ENCODE measurements at regions of chr1 and their contacts with region 1.

Region 1: DNA sequence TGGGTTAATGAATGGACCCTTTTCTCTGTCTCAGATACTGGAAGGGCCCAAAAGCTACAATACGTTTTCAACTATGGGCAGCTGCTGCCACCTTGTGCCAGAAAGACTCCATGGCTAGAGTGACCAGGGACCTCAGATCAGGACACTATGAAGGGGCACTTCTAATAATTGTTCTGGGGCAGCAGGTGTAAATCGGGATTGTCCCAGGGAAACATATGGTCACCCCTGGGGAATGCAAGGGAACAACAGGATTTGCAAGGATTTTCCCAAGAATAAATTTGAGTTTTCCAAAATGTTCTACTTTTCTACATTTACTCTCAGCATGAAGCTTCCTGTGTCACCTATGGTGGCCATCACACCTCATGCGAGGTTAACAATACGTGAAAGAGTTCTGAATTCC is 12.0 kb upstream of the FCAMR start:
- DNase-seq: peak; percentile 81
- H3K4me3 Mint-ChIP-seq: no peak overlapping the region
- H3K27ac Mint-ChIP-seq: no peak overlapping the region
- H3K4me1 Mint-ChIP-seq: no peaks in the 10 kb centered on the region
- H3K27me3 Mint-ChIP-seq: no peaks in the 10 kb centered on the region
- CTCF ChIP-seq: peak; percentile 99

Region 2: GRCh38 chr1:206002871-206003801 is 979.1 kb before region 1 on chr1 and contains the start of gene RAB7B:
- CTCF ChIA-PET with region 1: no interaction called
- POLR2A ChIA-PET with region 1: no interaction called
- intact Hi-C with region 1: no loop called
- DNase-seq: peak; percentile 91
- H3K4me3 Mint-ChIP-seq: peak within 1 kb of the TSS; percentile 69
- H3K27ac Mint-ChIP-seq: peak within 1 kb of the TSS; percentile 75
- H3K4me1 Mint-ChIP-seq: peaks cover 37% of the 10 kb centered on the region
- H3K27me3 Mint-ChIP-seq: no peaks in the 10 kb centered on the region
- CTCF ChIP-seq: no peak
- total RNA-seq, gene RAB7B: 1.6 and 3.6 TPM in 2 replicates

Region 3: DNA sequence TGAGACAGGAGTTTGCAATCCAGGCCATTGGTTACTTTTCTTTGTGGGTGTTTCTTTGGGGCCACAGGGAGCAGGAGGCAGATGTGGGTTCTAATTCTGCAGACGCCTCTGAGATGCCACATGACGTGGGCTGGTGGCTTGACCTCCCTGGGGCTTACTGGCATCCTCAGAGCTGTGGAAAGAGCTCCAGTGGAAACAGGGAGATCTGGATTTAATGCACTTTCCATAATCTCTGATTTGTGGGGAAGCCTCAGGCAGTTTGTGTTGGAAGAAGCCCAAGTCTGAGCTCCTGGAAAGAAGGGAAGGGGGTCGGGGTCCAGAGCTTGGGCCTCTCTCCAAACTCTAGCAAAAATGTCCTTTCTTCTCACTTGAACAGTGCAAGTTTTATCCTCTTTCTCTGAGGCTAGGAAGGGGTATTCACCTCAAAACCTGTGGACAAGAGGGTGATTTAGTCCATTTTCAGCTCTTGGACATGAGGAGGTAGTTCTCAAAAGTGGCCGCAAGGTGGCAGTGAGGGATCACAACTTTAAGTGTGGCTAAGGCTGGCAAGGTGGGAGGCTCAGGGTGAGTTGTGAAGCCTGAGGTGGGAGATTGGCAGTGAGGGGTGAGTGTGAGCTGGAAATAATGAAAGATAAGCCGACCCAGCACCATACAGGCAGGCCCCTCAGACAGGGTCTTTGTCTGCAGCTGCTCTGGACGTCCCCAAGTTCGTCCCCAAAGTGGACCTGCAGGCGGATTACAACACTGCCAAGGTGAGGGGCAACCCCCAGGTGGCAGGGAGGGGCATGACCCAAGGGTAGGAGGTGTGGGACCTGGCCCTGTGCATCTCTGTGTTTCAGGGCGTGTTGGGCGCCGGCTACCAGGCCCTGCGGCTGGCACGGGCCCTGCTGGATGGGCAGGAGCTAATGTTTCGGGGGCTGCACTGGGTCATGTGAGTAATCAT is 502.8 kb before region 1 on chr1:
- CTCF ChIA-PET with region 1: interaction called, 14 read pairs
- POLR2A ChIA-PET with region 1: no interaction called
- intact Hi-C with region 1: no loop called
- DNase-seq: peak; percentile 93
- H3K4me3 Mint-ChIP-seq: no peak overlapping the region
- H3K27ac Mint-ChIP-seq: no peak overlapping the region
- H3K4me1 Mint-ChIP-seq: peaks cover 29% of the 10 kb centered on the region
- H3K27me3 Mint-ChIP-seq: no peaks in the 10 kb centered on the region
- CTCF ChIP-seq: peak; percentile 97

Region 4: GRCh38 chr1:206612129-206612876 is 369.9 kb before region 1 on chr1 and contains the start of gene EIF2D:
- CTCF ChIA-PET with region 1: interaction called, 113 read pairs
- POLR2A ChIA-PET with region 1: interaction called, 13 read pairs
- intact Hi-C with region 1: loop called (anchors 1 kb)
- DNase-seq: peak; percentile 99
- H3K4me3 Mint-ChIP-seq: peak within 1 kb of the TSS; percentile 88
- H3K27ac Mint-ChIP-seq: peak within 1 kb of the TSS; percentile 97
- H3K4me1 Mint-ChIP-seq: peaks cover 21% of the 10 kb centered on the region
- H3K27me3 Mint-ChIP-seq: no peaks in the 10 kb centered on the region
- CTCF ChIP-seq: peak; percentile 100
- total RNA-seq, gene EIF2D: 110 and 116 TPM in 2 replicates

Region 5: GRCh38 chr1:206734499-206735142 is 247.6 kb before region 1 on chr1:
- CTCF ChIA-PET with region 1: interaction called, 64 read pairs
- POLR2A ChIA-PET with region 1: interaction called, 6 read pairs
- intact Hi-C with region 1: loop called (anchors 1 kb)
- DNase-seq: peak; percentile 73
- H3K4me3 Mint-ChIP-seq: no peak overlapping the region
- H3K27ac Mint-ChIP-seq: peak overlapping the region; percentile 6
- H3K4me1 Mint-ChIP-seq: peaks cover 9% of the 10 kb centered on the region
- H3K27me3 Mint-ChIP-seq: no peaks in the 10 kb centered on the region
- CTCF ChIP-seq: peak; percentile 97

Region 6: DNA sequence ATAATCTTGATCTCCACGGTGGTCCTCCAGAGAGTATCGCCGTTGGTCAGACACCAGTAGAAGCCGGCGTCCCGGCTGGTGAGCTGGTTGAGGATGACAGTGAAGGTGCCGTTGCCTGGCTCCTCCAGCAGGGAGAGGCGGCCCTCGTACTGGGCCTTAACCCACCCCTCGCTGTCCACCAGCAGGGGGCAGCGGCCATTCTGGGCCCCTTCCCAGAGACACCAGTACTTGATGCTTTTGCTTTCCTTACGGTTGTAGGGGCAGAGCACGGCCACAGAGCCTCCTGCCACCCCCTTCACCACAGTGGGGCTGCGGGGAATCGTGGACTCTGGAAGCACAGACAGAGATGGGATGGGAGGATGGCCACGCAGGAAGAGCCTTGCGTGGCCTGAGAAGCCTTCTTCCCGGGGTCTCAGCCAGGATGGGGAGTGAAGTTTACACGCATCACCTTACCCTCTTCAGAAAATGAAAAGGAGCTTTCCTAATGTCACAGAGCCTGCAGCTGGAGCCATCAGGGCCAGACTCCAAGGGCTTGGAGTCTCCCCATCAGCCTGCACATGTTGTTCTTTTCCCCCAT is 46.6 kb before region 1 on chr1:
- CTCF ChIA-PET with region 1: interaction called, 74 read pairs
- POLR2A ChIA-PET with region 1: no interaction called
- intact Hi-C with region 1: no loop called
- DNase-seq: peak; percentile 62
- H3K4me3 Mint-ChIP-seq: no peak overlapping the region
- H3K27ac Mint-ChIP-seq: no peak overlapping the region
- H3K4me1 Mint-ChIP-seq: peaks cover 8% of the 10 kb centered on the region
- H3K27me3 Mint-ChIP-seq: no peaks in the 10 kb centered on the region
- CTCF ChIP-seq: peak; percentile 59

Region 7: GRCh38 chr1:206998816-206999215 is 16.6 kb after region 1 on chr1:
- CTCF ChIA-PET with region 1: interaction called, 98 read pairs
- POLR2A ChIA-PET with region 1: interaction called, 5 read pairs
- intact Hi-C with region 1: no loop called
- DNase-seq: peak; percentile 78
- H3K4me3 Mint-ChIP-seq: no peak overlapping the region
- H3K27ac Mint-ChIP-seq: no peak overlapping the region
- H3K4me1 Mint-ChIP-seq: peaks cover 26% of the 10 kb centered on the region
- H3K27me3 Mint-ChIP-seq: no peaks in the 10 kb centered on the region
- CTCF ChIP-seq: no peak

Region 8: DNA sequence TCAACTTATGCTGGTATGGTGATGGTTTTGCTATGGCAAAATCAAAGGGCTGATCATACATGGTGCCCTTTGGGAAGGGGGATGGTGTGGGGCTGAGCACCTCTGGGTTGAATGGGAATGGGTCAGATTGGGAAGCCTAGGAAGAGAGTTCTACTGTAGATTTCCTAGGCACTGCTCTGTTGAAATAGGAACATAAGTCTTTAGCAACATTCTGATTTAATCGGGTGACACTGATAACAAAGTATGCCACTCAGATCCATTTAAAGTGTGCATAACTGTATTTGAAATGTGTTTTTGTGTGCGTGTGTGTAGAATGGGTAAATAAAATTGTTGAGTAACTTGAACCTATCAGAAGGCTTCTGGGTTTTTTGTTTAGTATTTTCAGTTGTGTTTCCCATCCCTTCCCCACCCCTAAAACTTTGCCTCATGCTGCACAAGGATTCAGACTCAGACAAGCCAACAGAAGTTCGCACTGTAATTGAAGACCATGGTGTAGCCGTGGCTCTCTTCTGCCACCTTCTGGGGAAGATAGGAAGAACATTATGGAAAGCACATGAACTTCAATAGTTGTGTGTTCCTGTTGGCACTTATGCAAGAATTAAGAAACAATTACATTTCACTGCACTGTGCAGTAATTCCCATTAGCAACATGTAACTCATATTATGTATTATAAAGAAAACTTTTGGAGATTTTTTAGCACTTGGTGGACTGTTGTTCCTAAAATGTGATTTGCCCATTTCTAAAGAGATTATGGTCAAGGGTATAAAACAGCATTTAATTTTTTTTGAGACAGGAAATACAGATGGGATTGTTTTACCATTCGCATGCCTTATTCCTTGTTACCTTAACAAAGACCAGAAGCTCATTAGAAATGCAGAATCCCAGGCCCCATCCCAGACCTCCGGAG is 95.5 kb after region 1 on chr1:
- CTCF ChIA-PET with region 1: interaction called, 26 read pairs
- POLR2A ChIA-PET with region 1: interaction called, 3 read pairs
- intact Hi-C with region 1: loop called (anchors 1 kb)
- DNase-seq: peak; percentile 96
- H3K4me3 Mint-ChIP-seq: no peak overlapping the region
- H3K27ac Mint-ChIP-seq: no peak overlapping the region
- H3K4me1 Mint-ChIP-seq: peaks cover 23% of the 10 kb centered on the region
- H3K27me3 Mint-ChIP-seq: peaks cover 7% of the 10 kb centered on the region
- CTCF ChIP-seq: peak; percentile 99

Measured in MCF 10A (cell line).